ENCODE measurements at regions of chr6 and their contacts with region 1.

Region 1: GRCh38 chr6:119284861-119285521 is 64.6 kb downstream of the MAN1A1 start:
- DNase-seq: no peak
- H3K4me3 ChIP-seq: no peak overlapping the region
- H3K27ac ChIP-seq: no peak overlapping the region
- H3K4me1 ChIP-seq: no peaks in the 10 kb centered on the region
- H3K27me3 ChIP-seq: no peaks in the 10 kb centered on the region
- CTCF ChIP-seq: no peak
- EP300 ChIP-seq: no peak
- POLR2A ChIP-seq: no peak

Region 2: DNA sequence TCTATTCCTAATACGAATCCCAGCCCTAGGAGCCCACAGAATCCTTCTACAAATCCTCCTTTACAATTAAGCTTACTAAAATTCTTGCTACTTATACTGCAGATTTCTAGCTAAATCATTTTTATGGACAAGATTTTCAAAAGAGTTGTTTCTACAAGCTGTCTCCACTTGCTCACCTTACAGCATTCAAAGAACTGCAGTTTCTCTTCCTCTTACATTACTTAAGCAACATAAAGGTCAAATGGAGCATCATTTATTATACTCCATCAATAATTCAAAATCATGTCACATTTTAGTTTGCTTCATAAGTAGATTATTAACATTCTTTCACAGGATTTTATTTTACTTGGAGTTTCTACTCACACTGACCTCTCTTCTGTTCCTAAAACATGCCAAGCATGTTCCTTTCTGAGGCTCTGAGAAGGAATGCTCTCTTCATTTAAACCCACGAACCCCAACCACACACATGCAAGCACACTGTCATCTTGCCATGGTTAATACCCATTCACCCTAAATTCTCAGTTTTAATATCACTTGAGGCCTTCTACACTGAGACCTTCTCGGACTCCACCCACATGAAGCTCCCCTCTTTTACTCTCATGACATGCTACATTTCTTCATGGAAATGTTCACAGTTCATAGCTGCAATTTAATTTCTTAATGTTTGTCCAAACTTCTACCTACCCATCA is 1661.1 kb after region 1 on chr6:
- intact Hi-C with region 1: loop called in 1 of 4 experiments (anchors 5 kb)
- DNase-seq: no peak
- H3K4me3 ChIP-seq: no peak overlapping the region
- H3K27ac ChIP-seq: no peak overlapping the region
- H3K4me1 ChIP-seq: no peaks in the 10 kb centered on the region
- H3K27me3 ChIP-seq: no peaks in the 10 kb centered on the region
- CTCF ChIP-seq: no peak
- EP300 ChIP-seq: no peak
- POLR2A ChIP-seq: no peak